ENCODE measurements at regions of chr22 and their contacts with region 1.

Region 1: DNA sequence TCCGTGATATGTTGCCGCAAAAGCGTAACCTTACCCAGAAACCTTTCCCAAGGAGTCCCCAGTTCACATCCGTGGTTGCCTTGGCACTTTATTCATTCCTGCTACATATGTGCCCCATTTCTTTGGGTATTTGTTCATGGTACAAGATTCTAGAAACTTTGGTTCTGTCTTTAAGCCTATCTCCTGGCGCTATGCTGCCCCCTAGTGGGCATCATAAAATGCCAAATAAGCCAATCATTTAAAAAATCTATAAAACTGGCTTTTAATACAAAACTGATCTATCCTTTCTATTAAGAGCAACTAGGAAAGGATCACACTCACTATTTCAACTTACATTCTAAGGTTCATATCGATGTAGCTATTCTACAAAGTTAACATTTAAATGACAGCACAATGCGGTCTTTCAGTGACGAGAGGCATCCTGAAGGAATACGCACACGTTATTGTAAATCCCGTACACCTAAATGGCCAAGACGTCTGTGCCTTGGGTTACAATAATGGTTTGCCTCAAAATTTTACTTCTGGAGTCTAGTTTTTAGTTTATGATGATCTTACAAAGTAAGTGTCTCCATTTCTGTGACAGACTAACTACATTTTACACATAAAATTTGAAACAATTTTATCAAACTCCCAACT is 16.2 kb downstream of the PIWIL3 start:
- DNase-seq: peak; percentile 54

Region 2: DNA sequence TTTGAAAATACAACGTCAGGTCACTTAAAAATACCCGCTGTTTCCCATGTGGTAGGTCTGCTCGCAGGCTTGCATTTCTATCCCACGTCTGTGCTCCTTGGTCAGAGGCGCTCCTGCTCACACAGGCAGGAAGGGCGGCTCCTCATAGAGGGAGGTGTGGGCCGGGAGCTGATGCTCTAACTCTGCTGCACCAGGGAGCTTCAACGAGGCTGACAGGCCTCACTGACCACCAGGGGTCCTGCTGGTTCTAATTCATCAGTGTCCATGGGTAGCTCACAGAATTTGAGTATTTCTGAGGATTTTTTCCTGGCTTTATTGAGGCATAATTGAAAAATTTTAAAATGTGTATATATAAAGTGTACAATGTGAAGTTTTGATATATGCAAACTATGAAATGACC is 52.2 kb before region 1 on chr22:
- CTCF ChIA-PET with region 1: interaction called, 10 read pairs
- POLR2A ChIA-PET with region 1: no interaction called
- DNase-seq: peak; percentile 48

Region 3: GRCh38 chr22:24736526-24737053 is 21.7 kb before region 1 on chr22:
- CTCF ChIA-PET with region 1: no interaction called
- POLR2A ChIA-PET with region 1: no interaction called
- DNase-seq: no peak

Region 4: DNA sequence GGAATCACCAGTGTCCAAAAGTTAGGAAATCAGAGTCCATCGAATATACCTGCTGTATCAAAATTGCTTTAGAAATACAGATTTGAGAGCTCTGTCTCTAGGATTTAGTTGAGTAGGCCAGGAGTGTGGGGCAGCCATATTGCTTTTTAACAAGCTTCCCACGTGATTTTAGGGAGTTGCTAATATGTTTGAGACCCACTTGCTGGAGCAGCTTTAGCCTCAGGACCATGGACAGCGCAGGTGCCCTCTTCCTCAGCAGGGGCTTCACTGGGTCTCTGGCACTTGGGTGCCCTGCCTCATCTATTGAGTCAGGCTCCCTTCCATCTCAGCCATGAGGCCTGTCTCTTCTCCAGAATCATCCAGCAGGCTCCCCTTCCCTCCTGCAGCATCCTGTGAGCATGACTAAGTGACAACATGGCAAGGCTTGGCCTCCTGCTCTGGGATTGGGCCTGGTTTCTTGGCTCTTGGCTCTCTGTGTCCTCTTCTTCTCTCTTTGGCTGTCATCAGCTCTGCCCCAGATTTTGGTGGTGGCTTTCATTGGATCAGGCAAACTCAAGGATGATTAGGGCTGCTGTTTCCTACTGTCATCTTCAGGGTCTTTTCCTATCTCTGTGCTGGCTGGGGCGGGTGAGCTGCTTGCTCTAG is 117.7 kb after region 1 on chr22:
- CTCF ChIA-PET with region 1: no interaction called
- POLR2A ChIA-PET with region 1: no interaction called
- DNase-seq: peak; percentile 50

Region 5: GRCh38 chr22:25027959-25028840 is 269.9 kb after region 1 on chr22:
- CTCF ChIA-PET with region 1: no interaction called
- POLR2A ChIA-PET with region 1: no interaction called
- DNase-seq: peak; percentile 42